Activated CD4-positive, alpha-beta T cell treated with anti-CD3 and anti-CD28 coated beads for 36 hours (primary cell): ENCODE measurements at regions of chr13 and their contacts with region 1.

Region 1: GRCh38 chr13:21176220-21176982 is at the starts of genes MRPL57 and SKA3:
- DNase-seq: peak; percentile 96
- ATAC-seq: peak; percentile 96
- H3K4me3 Mint-ChIP-seq: peak within 1 kb of the TSS; percentile 98
- H3K27ac Mint-ChIP-seq: peak within 1 kb of the TSS; percentile 97
- H3K4me1 Mint-ChIP-seq: peaks cover 20% of the 10 kb centered on the region
- H3K27me3 Mint-ChIP-seq: no peaks in the 10 kb centered on the region
- total RNA-seq, gene MRPL57: 18.6 to 23.0 TPM
- total RNA-seq, gene SKA3: 40.7 to 53.7 TPM

Region 2: GRCh38 chr13:20703780-20704445 is 472.5 kb before region 1 on chr13:
- CTCF ChIA-PET with region 1: interaction called, 3 read pairs
- POLR2A ChIA-PET with region 1: no interaction called
- intact Hi-C with region 1: loop called in 1 of 2 experiments (anchors 10 kb)
- DNase-seq: peak; percentile 87
- ATAC-seq: peak; percentile 89
- H3K4me3 Mint-ChIP-seq: peak overlapping the region; percentile 58
- H3K27ac Mint-ChIP-seq: no peak overlapping the region
- H3K4me1 Mint-ChIP-seq: peaks cover 13% of the 10 kb centered on the region
- H3K27me3 Mint-ChIP-seq: peaks cover 21% of the 10 kb centered on the region

Region 3: GRCh38 chr13:20902438-20903163 is 273.8 kb before region 1 on chr13 and contains the start of gene XPO4:
- CTCF ChIA-PET with region 1: no interaction called
- POLR2A ChIA-PET with region 1: interaction called, 3 read pairs
- intact Hi-C with region 1: loop called in 1 of 2 experiments (anchors 1 kb)
- DNase-seq: peak; percentile 91
- ATAC-seq: peak; percentile 94
- H3K4me3 Mint-ChIP-seq: peak within 1 kb of the TSS; percentile 91
- H3K27ac Mint-ChIP-seq: peak within 1 kb of the TSS; percentile 92
- H3K4me1 Mint-ChIP-seq: peaks cover 32% of the 10 kb centered on the region
- H3K27me3 Mint-ChIP-seq: no peaks in the 10 kb centered on the region
- total RNA-seq, gene XPO4: 22.8 to 26.4 TPM

Region 4: DNA sequence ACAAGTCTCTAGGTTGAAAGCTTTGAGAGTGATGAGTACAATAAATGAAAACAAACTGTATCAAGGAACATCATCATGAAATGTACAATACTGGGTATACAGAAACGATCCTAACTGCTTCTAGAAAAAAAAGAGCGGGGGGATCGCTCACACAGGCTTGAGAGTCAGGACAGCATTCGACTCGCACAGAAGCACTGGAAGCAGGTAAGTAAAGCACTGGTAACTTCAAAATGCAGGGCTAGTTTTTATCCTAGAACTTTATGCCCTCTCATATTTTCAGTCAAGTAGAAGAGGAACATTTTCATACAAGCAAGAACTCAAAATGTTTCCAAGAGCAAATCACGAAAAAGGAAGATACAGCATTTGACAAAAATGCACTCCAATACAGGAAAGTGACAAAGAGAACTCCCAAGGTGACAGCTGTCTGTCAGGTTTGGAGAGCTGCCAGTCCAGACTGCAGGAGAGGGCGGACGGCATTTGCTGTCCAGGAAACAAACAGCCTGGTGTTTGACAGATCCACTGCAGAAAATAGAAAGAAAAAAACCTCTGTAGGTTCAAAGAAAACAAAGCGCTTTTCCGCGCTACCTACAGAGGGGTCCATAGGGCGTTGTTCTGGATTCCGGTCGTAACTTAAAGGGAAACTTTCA is 215.6 kb before region 1 on chr13:
- CTCF ChIA-PET with region 1: no interaction called
- POLR2A ChIA-PET with region 1: no interaction called
- intact Hi-C with region 1: no loop called
- DNase-seq: no peak
- ATAC-seq: no peak
- H3K4me3 Mint-ChIP-seq: no peak overlapping the region
- H3K27ac Mint-ChIP-seq: no peak overlapping the region
- H3K4me1 Mint-ChIP-seq: peaks cover 2% of the 10 kb centered on the region
- H3K27me3 Mint-ChIP-seq: peaks cover 5% of the 10 kb centered on the region

Region 5: DNA sequence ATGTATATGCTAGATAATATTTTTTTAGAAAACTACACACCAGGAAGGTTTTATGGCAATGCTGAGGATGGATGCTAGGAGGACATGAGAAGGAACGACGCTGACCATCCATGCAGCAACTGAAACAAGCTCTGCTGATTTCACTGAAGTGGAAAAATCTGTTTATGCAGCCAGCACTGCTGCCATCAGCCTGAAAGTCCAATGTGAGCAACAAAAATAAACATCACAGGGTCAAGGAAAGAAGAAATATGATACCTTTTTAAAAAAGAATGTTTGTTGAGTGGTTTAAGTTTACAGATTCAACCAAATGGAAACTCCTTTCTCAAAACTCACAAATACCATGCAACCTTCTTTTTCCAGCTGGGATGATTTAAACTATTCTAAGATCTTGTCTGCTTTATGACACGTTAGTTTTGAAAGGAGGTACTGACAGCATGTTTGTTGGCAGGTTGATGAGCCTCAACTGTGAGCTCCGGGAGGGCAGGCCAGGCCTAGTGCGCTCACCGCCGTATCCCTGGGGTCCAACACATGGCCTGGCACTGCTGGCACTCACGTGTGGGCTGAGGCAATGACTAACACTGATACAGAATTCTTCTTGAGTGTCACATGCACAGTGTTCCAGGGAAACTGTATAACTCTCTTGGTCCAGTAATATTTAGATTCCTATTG is 161.8 kb before region 1 on chr13:
- CTCF ChIA-PET with region 1: no interaction called
- POLR2A ChIA-PET with region 1: interaction called, 3 read pairs
- intact Hi-C with region 1: loop called in 1 of 2 experiments (anchors 1 kb)
- DNase-seq: no peak
- ATAC-seq: no peak
- H3K4me3 Mint-ChIP-seq: no peak overlapping the region
- H3K27ac Mint-ChIP-seq: no peak overlapping the region
- H3K4me1 Mint-ChIP-seq: peaks cover 28% of the 10 kb centered on the region
- H3K27me3 Mint-ChIP-seq: no peaks in the 10 kb centered on the region

Region 6: DNA sequence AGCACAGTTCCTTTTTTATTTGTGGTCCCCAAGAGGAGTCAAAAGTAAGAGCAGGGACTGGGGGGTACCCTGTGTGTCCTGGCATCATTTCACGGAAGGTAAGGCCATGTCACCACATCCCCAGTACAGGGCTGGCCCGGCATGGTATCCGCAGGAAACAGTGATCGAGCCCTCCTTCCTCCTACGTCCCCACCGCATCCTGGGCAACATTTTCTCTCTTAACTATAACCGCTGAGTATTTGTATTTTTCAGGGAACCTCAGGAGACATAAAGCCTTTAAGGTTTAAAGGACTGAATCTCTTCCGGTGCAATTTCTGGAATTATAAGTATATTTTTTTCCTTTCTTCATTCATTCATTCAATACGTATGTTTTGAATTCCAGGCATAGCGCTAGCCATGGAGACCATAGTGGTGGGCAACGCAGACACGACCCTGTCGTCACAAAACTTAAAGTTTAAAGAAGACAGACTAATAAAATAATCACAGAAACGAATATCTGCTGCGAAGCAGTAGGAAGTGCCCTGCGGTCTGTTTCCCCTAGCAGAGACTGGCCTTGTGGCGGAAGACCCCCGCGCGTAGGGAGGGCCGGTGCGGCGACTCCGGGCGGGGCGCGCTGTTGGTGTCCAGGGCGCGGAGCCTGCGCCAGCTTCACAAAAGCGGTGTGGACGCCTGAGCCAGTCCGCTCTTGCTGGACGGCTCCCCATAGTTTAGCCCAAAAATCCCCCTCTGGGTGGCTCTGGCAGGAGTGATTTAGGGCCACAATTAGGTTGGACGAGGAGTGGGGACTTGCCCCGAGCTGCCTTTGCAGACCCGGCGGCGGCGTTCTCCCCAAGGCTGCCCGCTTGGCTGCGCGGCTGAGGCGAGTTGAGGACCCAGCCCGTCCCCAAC is 101.1 kb before region 1 on chr13:
- CTCF ChIA-PET with region 1: no interaction called
- POLR2A ChIA-PET with region 1: no interaction called
- intact Hi-C with region 1: no loop called
- DNase-seq: peak; percentile 65
- ATAC-seq: peak; percentile 81
- H3K4me3 Mint-ChIP-seq: peak overlapping the region; percentile 61
- H3K27ac Mint-ChIP-seq: peak overlapping the region; percentile 14
- H3K4me1 Mint-ChIP-seq: peaks cover 13% of the 10 kb centered on the region
- H3K27me3 Mint-ChIP-seq: peaks cover 9% of the 10 kb centered on the region

Region 7: GRCh38 chr13:21111546-21111945 is 64.9 kb before region 1 on chr13:
- CTCF ChIA-PET with region 1: interaction called, 4 read pairs
- POLR2A ChIA-PET with region 1: no interaction called
- intact Hi-C with region 1: loop called (anchors 1 to 2 kb)
- DNase-seq: no peak
- ATAC-seq: no peak
- H3K4me3 Mint-ChIP-seq: no peak overlapping the region
- H3K27ac Mint-ChIP-seq: no peak overlapping the region
- H3K4me1 Mint-ChIP-seq: peaks cover 3% of the 10 kb centered on the region
- H3K27me3 Mint-ChIP-seq: no peaks in the 10 kb centered on the region

Region 8: DNA sequence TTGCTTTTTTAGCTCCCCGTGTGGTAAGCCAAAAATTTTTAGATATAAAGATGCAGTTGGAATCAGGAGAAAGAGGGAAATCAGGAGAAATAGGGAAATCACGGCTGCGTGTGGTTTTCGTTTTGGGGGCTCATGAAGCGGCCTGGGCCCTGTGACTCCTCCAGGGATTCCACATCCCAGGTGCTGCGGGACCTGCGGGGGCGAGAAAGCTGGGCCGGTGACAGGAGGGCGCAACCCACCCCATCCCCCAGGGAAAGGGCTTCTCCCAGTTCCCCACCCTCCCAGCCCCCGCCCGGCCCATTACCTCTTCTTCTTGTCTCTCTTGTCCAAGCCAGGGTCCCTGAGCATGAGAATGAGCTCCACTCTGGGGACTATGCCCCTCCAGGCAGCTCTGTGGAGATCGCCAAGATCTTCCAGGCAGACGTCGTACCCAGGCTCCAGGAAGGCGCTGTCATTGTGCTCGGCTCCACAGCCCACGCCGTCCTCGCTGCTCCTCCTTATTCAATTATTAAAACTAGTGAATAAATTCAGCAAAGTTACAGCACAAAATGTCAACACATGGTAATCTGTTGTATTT is 111.0 kb after region 1 on chr13:
- CTCF ChIA-PET with region 1: no interaction called
- POLR2A ChIA-PET with region 1: no interaction called
- intact Hi-C with region 1: no loop called
- DNase-seq: no peak
- ATAC-seq: no peak
- H3K4me3 Mint-ChIP-seq: no peak overlapping the region
- H3K27ac Mint-ChIP-seq: no peak overlapping the region
- H3K4me1 Mint-ChIP-seq: no peaks in the 10 kb centered on the region
- H3K27me3 Mint-ChIP-seq: peaks cover 8% of the 10 kb centered on the region

Region 9: GRCh38 chr13:21297914-21298831 is 121.8 kb after region 1 on chr13:
- CTCF ChIA-PET with region 1: interaction called, 15 read pairs
- POLR2A ChIA-PET with region 1: interaction called, 7 read pairs
- intact Hi-C with region 1: loop called (anchors 1 to 2 kb)
- DNase-seq: peak; percentile 93
- ATAC-seq: peak; percentile 93
- H3K4me3 Mint-ChIP-seq: peak overlapping the region; percentile 84
- H3K27ac Mint-ChIP-seq: peak overlapping the region; percentile 82
- H3K4me1 Mint-ChIP-seq: peaks cover 25% of the 10 kb centered on the region
- H3K27me3 Mint-ChIP-seq: no peaks in the 10 kb centered on the region

Region 10: GRCh38 chr13:21476893-21477472 is 300.6 kb after region 1 on chr13:
- CTCF ChIA-PET with region 1: interaction called, 10 read pairs
- POLR2A ChIA-PET with region 1: interaction called, 4 read pairs
- intact Hi-C with region 1: loop called (anchors 1 to 10 kb)
- DNase-seq: peak; percentile 91
- ATAC-seq: peak; percentile 96
- H3K4me3 Mint-ChIP-seq: peak overlapping the region; percentile 78
- H3K27ac Mint-ChIP-seq: peak overlapping the region; percentile 52
- H3K4me1 Mint-ChIP-seq: peaks cover 8% of the 10 kb centered on the region
- H3K27me3 Mint-ChIP-seq: no peaks in the 10 kb centered on the region

Region 11: GRCh38 chr13:22198001-22198400 is 1021.6 kb after region 1 on chr13:
- CTCF ChIA-PET with region 1: no interaction called
- POLR2A ChIA-PET with region 1: no interaction called
- intact Hi-C with region 1: no loop called
- DNase-seq: no peak
- ATAC-seq: no peak
- H3K4me3 Mint-ChIP-seq: no peak overlapping the region
- H3K27ac Mint-ChIP-seq: no peak overlapping the region
- H3K4me1 Mint-ChIP-seq: no peaks in the 10 kb centered on the region
- H3K27me3 Mint-ChIP-seq: no peaks in the 10 kb centered on the region